ENCODE measurements at regions of chr19 and their contacts with region 1.

Region 1: DNA sequence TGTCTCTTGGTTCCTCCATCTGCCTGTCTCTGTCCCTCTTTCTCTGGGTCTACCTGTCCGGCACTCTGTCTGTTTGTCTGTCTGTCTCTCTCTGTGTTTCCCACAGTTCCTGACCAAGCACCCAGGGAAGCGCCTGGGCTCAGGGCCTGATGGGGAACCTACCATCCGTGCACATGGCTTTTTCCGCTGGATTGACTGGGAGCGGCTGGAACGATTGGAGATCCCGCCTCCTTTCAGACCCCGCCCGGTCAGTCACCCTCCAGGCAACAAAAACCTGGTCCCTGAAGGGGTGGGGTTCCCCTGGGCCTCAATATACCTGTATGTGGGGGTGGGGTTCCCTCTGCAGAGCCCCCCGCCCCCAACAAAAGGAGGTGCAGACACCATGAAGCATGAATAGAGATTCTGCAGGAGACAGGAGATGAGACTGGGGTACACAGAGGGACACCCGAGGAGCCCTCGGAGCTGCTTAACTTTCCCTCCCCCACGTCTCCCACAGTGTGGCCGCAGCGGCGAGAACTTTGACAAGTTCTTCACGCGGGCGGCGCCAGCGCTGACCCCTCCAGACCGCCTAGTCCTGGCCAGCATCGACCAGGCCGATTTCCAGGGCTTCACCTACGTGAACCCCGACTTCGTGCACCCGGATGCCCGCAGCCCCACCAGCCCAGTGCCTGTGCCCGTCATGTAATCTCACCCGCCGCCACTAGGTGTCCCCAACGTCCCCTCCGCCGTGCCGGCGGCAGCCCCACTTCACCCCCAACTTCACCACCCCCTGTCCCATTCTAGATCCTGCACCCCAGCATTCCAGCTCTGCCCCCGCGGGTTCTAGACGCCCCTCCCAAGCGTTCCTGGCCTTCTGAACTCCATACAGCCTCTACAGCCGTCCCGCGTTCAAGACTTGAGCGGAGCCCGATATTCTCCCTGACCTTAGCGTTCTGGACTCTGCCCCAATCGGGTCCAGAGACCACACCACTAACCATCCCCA is 2.6 kb upstream of the CACNG7 start:
- DNase-seq: peak; percentile 89
- H3K4me3 ChIP-seq: peak overlapping the region in 1 of 8 donors; percentile 25
- H3K27ac ChIP-seq: no peak overlapping the region
- H3K4me1 ChIP-seq: peaks cover 0 to 33% (median 22%) of the 10 kb centered on the region in 6 donors
- H3K27me3 ChIP-seq: peaks cover 0 to 99% (median 51%) of the 10 kb centered on the region in 7 donors
- CTCF ChIP-seq: peak; percentile 58 to 93 (median 84)
- POLR2A ChIP-seq: no peak

Region 2: DNA sequence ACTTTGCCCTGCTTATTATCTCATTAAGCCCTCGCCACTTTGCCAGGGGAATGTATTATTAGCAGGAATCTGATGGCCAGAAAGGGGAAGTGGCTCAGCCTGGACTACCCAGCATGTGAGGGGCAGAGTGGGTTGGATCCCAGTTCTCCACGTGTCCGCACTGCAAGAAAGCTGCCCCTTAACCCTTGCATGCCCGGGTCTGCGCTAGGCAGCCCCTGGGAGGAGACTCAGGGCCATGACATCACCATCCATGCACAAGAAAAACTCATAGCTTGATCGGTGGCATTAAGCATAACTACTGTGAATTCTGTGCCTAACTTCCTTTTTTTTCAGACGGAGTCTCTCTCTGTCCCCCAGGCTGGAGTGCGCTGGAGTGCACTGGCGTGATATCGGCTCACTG is 65.2 kb after region 1 on chr19:
- intact Hi-C with region 1: no loop called
- DNase-seq: no peak
- H3K4me3 ChIP-seq: no peak overlapping the region
- H3K27ac ChIP-seq: no peak overlapping the region
- H3K4me1 ChIP-seq: peaks cover 0 to 5% (median 0%) of the 10 kb centered on the region in 6 donors
- H3K27me3 ChIP-seq: peaks cover 0 to 86% (median 11%) of the 10 kb centered on the region in 7 donors
- CTCF ChIP-seq: no peak
- POLR2A ChIP-seq: no peak

Region 3: DNA sequence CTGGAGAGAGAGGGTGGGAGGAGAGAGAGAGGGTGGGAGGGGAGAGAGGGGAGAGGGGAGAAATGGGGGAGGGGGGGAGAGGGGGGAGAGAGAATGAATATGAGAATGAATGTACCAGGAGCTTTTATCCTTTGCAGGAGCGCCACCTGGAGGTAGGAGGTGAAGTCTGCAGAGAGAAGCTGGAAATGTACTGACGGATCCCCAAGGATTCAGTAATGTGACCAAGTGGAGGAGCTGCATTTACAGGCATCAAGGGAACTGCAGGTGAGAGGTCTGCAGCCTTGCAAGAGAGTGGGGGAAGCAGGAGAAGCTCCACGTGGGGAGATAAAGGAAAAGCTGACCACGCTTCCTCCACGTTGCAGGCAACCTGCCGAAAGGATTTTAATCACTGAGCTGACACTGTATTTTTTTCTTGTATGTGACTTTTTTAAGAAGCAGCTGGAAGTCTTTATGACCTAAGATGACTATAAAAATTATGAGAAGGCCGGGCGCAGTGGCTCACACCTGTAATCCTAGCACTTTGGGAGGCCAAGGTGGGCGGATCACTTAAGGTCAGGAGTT is 123.5 kb after region 1 on chr19:
- intact Hi-C with region 1: loop called (anchors 10 kb)
- DNase-seq: peak; percentile 76
- H3K4me3 ChIP-seq: no peak overlapping the region
- H3K27ac ChIP-seq: no peak overlapping the region
- H3K4me1 ChIP-seq: peaks cover 0 to 25% (median 0%) of the 10 kb centered on the region in 6 donors
- H3K27me3 ChIP-seq: peaks cover 0 to 86% (median under 1%) of the 10 kb centered on the region in 7 donors
- CTCF ChIP-seq: peak; percentile 17 to 72 (median 56)
- POLR2A ChIP-seq: no peak